CD8-positive, alpha-beta T cell (primary cell): ENCODE measurements at regions of chr5 and their contacts with region 1.

Region 1: GRCh38 chr5:137629646-137630045 is 106.2 kb downstream of the KLHL3 start:
- DNase-seq: peak in 3 of 9 experiments; percentile 13 to 69 (median 58)
- ATAC-seq: peak; percentile 71
- H3K4me3 ChIP-seq: no peak overlapping the region
- H3K4me3 Mint-ChIP-seq: no peak overlapping the region
- H3K27ac ChIP-seq: no peak overlapping the region
- H3K27ac Mint-ChIP-seq: no peak overlapping the region
- H3K4me1 ChIP-seq: no peaks in the 10 kb centered on the region
- H3K4me1 Mint-ChIP-seq: no peaks in the 10 kb centered on the region
- H3K27me3 ChIP-seq: no peaks in the 10 kb centered on the region
- H3K27me3 Mint-ChIP-seq: no peaks in the 10 kb centered on the region
- CTCF ChIP-seq: peak; percentile 96

Region 2: GRCh38 chr5:137641148-137641547 is 11.5 kb after region 1 on chr5:
- CTCF ChIA-PET with region 1: interaction called, 24 read pairs
- POLR2A ChIA-PET with region 1: no interaction called
- intact Hi-C with region 1: no loop called
- DNase-seq: no peak
- ATAC-seq: no peak
- H3K4me3 ChIP-seq: no peak overlapping the region
- H3K4me3 Mint-ChIP-seq: no peak overlapping the region
- H3K27ac ChIP-seq: no peak overlapping the region
- H3K27ac Mint-ChIP-seq: no peak overlapping the region
- H3K4me1 ChIP-seq: no peaks in the 10 kb centered on the region
- H3K4me1 Mint-ChIP-seq: no peaks in the 10 kb centered on the region
- H3K27me3 ChIP-seq: no peaks in the 10 kb centered on the region
- H3K27me3 Mint-ChIP-seq: no peaks in the 10 kb centered on the region
- CTCF ChIP-seq: no peak

Region 3: DNA sequence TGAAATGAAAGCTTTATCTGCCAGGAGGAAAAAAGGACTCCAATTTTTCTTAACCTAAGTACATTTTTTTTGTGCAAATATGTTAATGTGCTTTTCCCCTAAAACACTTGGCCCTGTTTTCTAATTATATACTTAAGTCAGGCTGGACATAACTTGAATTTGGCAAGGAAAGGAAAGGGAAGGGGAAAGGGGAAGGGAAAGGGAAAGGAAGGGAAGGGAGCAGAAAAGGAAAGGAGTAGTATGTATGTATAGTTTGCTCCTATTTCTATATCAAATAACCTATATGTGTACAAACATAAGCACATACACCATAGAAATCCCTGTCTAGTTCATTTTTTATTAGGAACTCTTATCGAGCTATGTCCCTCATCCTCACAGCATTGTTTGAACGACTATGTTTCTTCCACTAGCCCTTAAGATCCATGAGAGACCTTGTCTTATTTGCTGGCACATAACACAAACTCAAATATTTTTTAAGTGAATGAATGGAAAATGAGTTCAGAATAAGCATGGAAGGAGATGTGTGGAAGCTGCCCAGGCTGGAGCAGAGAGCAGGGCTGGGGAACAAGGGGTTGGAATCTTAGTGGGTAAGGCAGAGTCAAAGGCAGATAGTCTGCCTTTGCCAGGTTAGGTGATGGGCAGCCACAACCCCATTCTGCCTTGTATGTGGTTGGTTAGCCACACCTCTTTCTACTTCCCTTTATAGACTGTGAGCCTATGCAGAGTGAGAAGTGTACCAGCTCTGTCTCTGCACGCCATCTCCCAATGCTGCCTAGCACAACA is 36.2 kb after region 1 on chr5:
- CTCF ChIA-PET with region 1: interaction called, 14 read pairs
- POLR2A ChIA-PET with region 1: no interaction called
- intact Hi-C with region 1: loop called in 1 of 2 experiments (anchors 1 kb)
- DNase-seq: peak in 8 of 9 experiments; percentile 16 to 69 (median 44)
- ATAC-seq: peak; percentile 100
- H3K4me3 ChIP-seq: no peak overlapping the region
- H3K4me3 Mint-ChIP-seq: no peak overlapping the region
- H3K27ac ChIP-seq: no peak overlapping the region
- H3K27ac Mint-ChIP-seq: peak overlapping the region; percentile 11
- H3K4me1 ChIP-seq: peaks cover 12% of the 10 kb centered on the region
- H3K4me1 Mint-ChIP-seq: peaks cover 16% of the 10 kb centered on the region
- H3K27me3 ChIP-seq: no peaks in the 10 kb centered on the region
- H3K27me3 Mint-ChIP-seq: no peaks in the 10 kb centered on the region
- CTCF ChIP-seq: no peak

Region 4: GRCh38 chr5:137778772-137779564 is 149.3 kb after region 1 on chr5:
- CTCF ChIA-PET with region 1: interaction called, 11 read pairs
- POLR2A ChIA-PET with region 1: no interaction called
- intact Hi-C with region 1: loop called in 1 of 2 experiments (anchors 1 kb)
- DNase-seq: peak in 2 of 9 experiments; percentile 39 to 52
- ATAC-seq: no peak
- H3K4me3 ChIP-seq: no peak overlapping the region
- H3K4me3 Mint-ChIP-seq: no peak overlapping the region
- H3K27ac ChIP-seq: no peak overlapping the region
- H3K27ac Mint-ChIP-seq: no peak overlapping the region
- H3K4me1 ChIP-seq: no peaks in the 10 kb centered on the region
- H3K4me1 Mint-ChIP-seq: no peaks in the 10 kb centered on the region
- H3K27me3 ChIP-seq: no peaks in the 10 kb centered on the region
- H3K27me3 Mint-ChIP-seq: no peaks in the 10 kb centered on the region
- CTCF ChIP-seq: peak; percentile 79

Region 5: GRCh38 chr5:138065102-138065501 is 435.5 kb after region 1 on chr5:
- CTCF ChIA-PET with region 1: interaction called, 23 read pairs
- POLR2A ChIA-PET with region 1: no interaction called
- intact Hi-C with region 1: loop called (anchors 1 kb)
- DNase-seq: peak in 3 of 9 experiments; percentile 9 to 14 (median 9)
- ATAC-seq: no peak
- H3K4me3 ChIP-seq: no peak overlapping the region
- H3K4me3 Mint-ChIP-seq: no peak overlapping the region
- H3K27ac ChIP-seq: no peak overlapping the region
- H3K27ac Mint-ChIP-seq: no peak overlapping the region
- H3K4me1 ChIP-seq: no peaks in the 10 kb centered on the region
- H3K4me1 Mint-ChIP-seq: peaks cover 4% of the 10 kb centered on the region
- H3K27me3 ChIP-seq: no peaks in the 10 kb centered on the region
- H3K27me3 Mint-ChIP-seq: no peaks in the 10 kb centered on the region
- CTCF ChIP-seq: no peak

Region 6: DNA sequence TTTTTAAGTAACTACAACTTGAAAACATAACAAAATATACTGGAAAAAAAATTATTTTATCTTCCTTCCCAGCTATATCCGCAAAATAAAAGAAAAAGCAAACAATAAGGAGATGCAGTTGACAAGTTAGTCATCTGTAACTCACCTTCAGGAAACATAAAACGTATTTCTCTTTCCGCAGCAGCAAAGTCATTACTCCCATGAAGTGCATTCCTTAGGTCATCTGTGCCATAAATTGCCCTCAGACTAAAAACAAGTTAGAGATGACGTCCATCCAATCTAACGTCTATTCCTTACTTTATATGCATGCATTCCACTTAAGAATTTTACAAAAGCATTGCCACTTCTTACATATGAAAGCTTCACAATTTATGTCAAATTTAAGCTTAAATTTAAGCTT is 498.7 kb after region 1 on chr5:
- CTCF ChIA-PET with region 1: interaction called, 4 read pairs
- POLR2A ChIA-PET with region 1: no interaction called
- intact Hi-C with region 1: loop called (anchors 1 to 2 kb)
- DNase-seq: no peak
- ATAC-seq: no peak
- H3K4me3 ChIP-seq: no peak overlapping the region
- H3K4me3 Mint-ChIP-seq: no peak overlapping the region
- H3K27ac ChIP-seq: no peak overlapping the region
- H3K27ac Mint-ChIP-seq: no peak overlapping the region
- H3K4me1 ChIP-seq: no peaks in the 10 kb centered on the region
- H3K4me1 Mint-ChIP-seq: no peaks in the 10 kb centered on the region
- H3K27me3 ChIP-seq: no peaks in the 10 kb centered on the region
- H3K27me3 Mint-ChIP-seq: peaks cover 2% of the 10 kb centered on the region
- CTCF ChIP-seq: no peak